ENCODE measurements at regions of chr6 and their contacts with region 1.

Region 1: DNA sequence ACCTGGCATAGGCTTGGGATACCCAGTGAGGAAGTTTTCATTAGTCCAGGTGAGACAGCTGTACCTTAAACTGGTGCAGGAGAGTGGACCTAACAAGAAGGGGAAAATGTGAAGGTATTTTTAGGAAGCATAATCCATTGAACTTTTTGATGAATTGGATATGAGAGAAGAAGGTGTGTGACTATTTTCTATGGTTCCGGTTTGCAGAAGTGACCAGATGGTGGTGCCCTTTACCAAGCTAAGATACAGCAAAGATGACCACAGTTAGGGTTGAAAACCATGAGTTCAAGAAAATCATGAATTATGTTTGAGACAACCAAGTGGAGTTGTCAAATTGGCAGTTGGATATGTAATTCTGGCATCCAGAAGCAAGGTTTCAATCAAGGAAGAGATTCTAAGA is 61.9 kb upstream of the NRSN1 start:
- DNase-seq: peak; percentile 15
- ATAC-seq: peak; percentile 63
- H3K4me3 ChIP-seq: no peak overlapping the region
- H3K27ac ChIP-seq: no peak overlapping the region
- H3K4me1 ChIP-seq: no peaks in the 10 kb centered on the region
- H3K27me3 ChIP-seq: no peaks in the 10 kb centered on the region
- CTCF ChIP-seq: peak; percentile 31 to 56 (median 31); a peak in 4 of 6 replicates
- POLR2A ChIP-seq: no peak
- RAD21 ChIP-seq: peak; percentile 60

Region 2: DNA sequence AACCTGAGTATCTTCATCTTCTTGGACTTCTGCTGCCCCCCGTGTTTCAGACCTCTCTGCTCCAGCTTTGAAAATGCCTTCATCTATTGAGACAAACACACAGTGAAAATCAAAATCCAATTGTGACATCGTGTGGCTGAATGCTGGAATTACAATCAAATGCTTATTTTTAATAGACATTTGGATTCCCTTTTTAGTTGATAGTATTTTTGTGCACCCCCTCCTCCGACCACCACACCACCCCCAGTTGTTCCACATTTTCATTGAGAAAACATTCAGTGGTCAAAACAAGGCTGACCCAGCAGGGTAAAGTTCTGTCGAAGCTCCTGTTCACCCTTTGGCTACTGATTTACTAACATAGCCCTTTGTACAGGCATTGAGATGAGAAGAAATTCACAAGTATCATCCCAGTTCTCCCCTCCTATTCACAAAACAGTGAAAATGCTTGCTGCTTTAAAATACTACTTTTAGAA is 141.0 kb after region 1 on chr6:
- CTCF ChIA-PET with region 1: interaction called, 17 read pairs
- POLR2A ChIA-PET with region 1: no interaction called
- RAD21 ChIA-PET with region 1: no interaction called
- intact Hi-C with region 1: loop called (anchors 1 kb)
- DNase-seq: peak; percentile 28
- ATAC-seq: peak; percentile 73
- H3K4me3 ChIP-seq: no peak overlapping the region
- H3K27ac ChIP-seq: no peak overlapping the region
- H3K4me1 ChIP-seq: no peaks in the 10 kb centered on the region
- H3K27me3 ChIP-seq: 0 out of 2 replicates have a peak, but pooled peaks cover 3% of the 10 kb centered on the region
- CTCF ChIP-seq: peak; percentile 42 to 67 (median 50); a peak in 4 of 6 replicates
- POLR2A ChIP-seq: no peak
- RAD21 ChIP-seq: peak; percentile 75

Measured in HCT116 (cell line).